ENCODE measurements at regions of chr11 and their contacts with region 1.

Region 1: DNA sequence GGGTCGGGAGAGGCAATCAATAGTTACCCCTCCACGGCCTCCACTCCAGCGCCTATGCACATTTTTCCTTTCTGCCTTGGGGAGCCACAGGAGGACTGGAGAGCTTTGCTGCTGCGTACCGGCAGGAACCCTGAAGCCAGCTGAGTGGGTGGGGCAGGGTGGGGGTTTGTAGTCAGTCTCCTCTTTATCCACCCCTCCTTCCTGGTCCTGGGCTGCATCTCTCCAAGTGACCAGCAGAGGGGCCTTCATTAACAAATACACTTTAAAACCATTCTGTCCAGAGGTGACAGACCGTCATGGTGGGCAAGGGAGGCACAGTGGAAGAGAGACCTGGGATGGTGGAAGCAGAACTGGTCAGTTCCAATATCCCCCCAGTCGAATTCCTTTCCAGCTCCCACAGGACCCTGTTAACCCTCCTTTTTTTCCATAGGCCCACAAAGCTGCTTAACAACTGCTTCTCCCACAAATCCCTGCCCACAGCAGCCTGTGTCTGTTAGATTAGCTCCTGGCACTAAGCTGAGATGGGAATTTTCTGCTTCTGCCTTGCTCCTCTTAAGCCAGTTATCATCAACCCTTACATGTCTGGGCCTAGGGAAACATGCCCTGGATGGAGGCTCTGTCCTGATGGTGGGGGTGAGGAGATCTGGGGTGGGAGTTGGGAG is 3.9 kb upstream of the ABCG4 start:
- DNase-seq: peak in 1 of 2 experiments; percentile 80
- H3K4me3 ChIP-seq: no peak overlapping the region
- H3K27ac ChIP-seq: no peak overlapping the region
- H3K4me1 ChIP-seq: peaks cover 5 to 13% (median 9%) of the 10 kb centered on the region in 4 experiments
- H3K27me3 ChIP-seq: peaks cover 11 to 28% (median 21%) of the 10 kb centered on the region in 4 experiments
- CTCF ChIP-seq: peak; percentile 48 to 63 (median 63)
- EP300 ChIP-seq: no peak
- POLR2A ChIP-seq: no peak
- RAD21 ChIP-seq: peak; percentile 30 to 58; a peak in 3 of 4 replicates

Region 2: GRCh38 chr11:119161871-119162623 is 17.1 kb after region 1 on chr11:
- CTCF ChIA-PET with region 1: interaction called, 389 read pairs
- POLR2A ChIA-PET with region 1: interaction called, 58 read pairs
- DNase-seq: no peak
- H3K4me3 ChIP-seq: no peak overlapping the region
- H3K27ac ChIP-seq: no peak overlapping the region
- H3K4me1 ChIP-seq: peaks cover 0 to 8% (median 3%) of the 10 kb centered on the region in 4 experiments; a peak in 5 of 7 replicates
- H3K27me3 ChIP-seq: no peaks in the 10 kb centered on the region; a peak in 2 of 7 replicates
- CTCF ChIP-seq: no peak
- EP300 ChIP-seq: no peak
- POLR2A ChIP-seq: no peak
- RAD21 ChIP-seq: no peak

Region 3: DNA sequence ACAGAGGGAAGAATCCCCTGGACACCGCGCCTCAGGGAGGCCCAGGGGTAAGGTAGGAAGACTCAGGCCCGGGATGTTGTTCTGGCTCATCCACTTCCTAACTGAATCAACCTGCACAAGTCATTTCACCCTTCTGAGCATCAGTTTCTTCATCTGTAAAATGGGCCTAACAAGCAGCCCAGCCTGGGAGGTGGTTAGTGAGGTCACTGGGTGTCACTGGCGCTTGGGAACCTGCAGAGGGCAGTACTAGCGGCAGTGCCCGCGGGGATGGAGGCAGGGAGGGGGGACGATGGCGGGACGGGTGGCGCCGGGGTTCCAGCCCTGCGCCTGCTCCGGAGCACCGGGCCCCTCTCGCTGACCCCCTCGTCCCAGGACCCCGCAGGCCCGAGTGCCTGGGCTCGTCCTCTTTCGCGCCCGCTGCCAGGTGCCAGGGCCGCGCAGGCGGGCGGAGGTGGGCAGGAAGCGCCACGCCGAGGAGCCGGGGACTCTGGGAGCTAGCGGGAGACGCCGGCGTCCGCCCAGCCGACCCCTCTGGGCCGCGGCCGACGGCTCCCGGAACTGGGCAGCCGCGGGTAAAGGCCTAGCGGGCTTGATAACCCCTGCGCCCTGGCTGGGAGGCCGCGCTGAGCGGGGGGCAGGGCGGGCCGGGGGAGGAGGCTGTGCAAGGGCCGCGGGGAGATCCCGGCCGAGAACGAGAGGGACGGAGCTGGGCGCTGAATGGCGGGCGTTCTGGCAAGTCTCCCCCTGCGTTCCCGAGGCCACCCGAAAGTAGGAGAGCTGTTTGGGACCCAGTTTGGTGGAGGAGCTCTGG is 23.7 kb after region 1 on chr11 and contains the start of gene NLRX1:
- CTCF ChIA-PET with region 1: interaction called, 389 read pairs
- POLR2A ChIA-PET with region 1: interaction called, 58 read pairs
- DNase-seq: peak; percentile 51 to 90
- H3K4me3 ChIP-seq: peak within 1 kb of the TSS; percentile 64 to 87 (median 68)
- H3K27ac ChIP-seq: peak within 1 kb of the TSS; percentile 88
- H3K4me1 ChIP-seq: peaks cover 0 to 4% (median 1%) of the 10 kb centered on the region in 4 experiments; a peak in 4 of 7 replicates
- H3K27me3 ChIP-seq: no peaks in the 10 kb centered on the region
- CTCF ChIP-seq: peak; percentile 82 to 94 (median 90)
- EP300 ChIP-seq: peak in 1 of 2 experiments; percentile 56; a peak in 1 of 3 replicates
- POLR2A ChIP-seq: peak in 1 of 2 experiments; percentile 69; a peak in 2 of 3 replicates
- RAD21 ChIP-seq: peak; percentile 43 to 62; a peak in 3 of 4 replicates
- total RNA-seq, gene NLRX1: 12.9 and 13.2 TPM in 2 replicates

Region 4: GRCh38 chr11:119205574-119206510 is 60.9 kb after region 1 on chr11 and contains the start of gene CBL:
- CTCF ChIA-PET with region 1: interaction called, 367 read pairs
- POLR2A ChIA-PET with region 1: interaction called, 3 read pairs
- DNase-seq: peak; percentile 75 to 99
- H3K4me3 ChIP-seq: peak within 1 kb of the TSS; percentile 92 to 100 (median 94)
- H3K27ac ChIP-seq: peak within 1 kb of the TSS; percentile 89; the same call in 1 of the 2 replicates
- H3K4me1 ChIP-seq: peaks cover 4 to 10% (median 6%) of the 10 kb centered on the region in 4 experiments; a peak in 6 of 7 replicates
- H3K27me3 ChIP-seq: no peaks in the 10 kb centered on the region
- CTCF ChIP-seq: peak; percentile 75 to 77 (median 77)
- EP300 ChIP-seq: peak in 1 of 2 experiments; percentile 36; a peak in 1 of 3 replicates
- POLR2A ChIP-seq: peak in 1 of 2 experiments; percentile 28; a peak in 1 of 3 replicates
- RAD21 ChIP-seq: peak; percentile 4 to 41; a peak in 3 of 4 replicates
- total RNA-seq, gene CBL: 57.6 and 57.8 TPM in 2 replicates

Measured in H1 (cell line).